ENCODE measurements at regions of chr19 and their contacts with region 1.

Region 1: GRCh38 chr19:44903602-44904425 is 1.8 kb upstream of the APOE start:
- DNase-seq: peak; percentile 71 to 89
- H3K4me3 ChIP-seq: no peak overlapping the region
- H3K4me3 Mint-ChIP-seq: no peak overlapping the region
- H3K27ac Mint-ChIP-seq: peak overlapping the region; percentile 51
- H3K4me1 ChIP-seq: peaks cover 30% of the 10 kb centered on the region
- H3K4me1 Mint-ChIP-seq: peaks cover 15% of the 10 kb centered on the region
- H3K27me3 ChIP-seq: no peaks in the 10 kb centered on the region
- H3K27me3 Mint-ChIP-seq: no peaks in the 10 kb centered on the region
- CTCF ChIP-seq: peak; percentile 99

Region 2: DNA sequence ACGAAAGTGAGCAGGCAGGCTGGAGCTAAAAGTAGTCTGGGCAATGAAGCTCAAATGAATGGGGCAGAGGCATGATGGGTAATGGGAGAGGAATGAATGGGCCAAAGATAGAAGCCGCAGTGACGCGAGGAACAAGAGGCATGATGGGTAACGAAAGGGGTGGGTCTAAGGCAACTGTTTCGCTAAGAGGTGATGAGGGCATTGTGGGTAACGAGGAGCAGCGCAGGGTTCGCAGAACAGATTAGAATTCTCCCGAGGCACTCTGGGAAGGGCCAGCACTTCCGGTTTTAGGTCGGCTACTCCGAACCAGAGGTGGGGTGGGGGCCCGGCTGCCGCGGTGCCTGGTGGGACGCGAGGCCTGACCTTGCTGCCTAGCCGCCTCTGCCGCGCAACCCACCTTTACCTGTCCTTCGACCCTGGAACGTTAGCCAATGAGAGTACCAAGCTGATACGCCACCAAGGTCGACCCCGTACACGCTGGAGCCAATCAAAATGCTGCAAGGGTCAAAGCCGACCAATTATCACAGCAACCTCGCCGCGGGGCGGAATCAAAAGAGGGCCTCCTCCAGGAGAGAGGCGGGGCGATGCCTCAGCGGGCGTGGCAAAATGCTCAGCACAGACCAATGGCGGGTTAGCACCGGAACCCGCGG is 13.3 kb before region 1 on chr19:
- CTCF ChIA-PET with region 1: interaction called, 18 read pairs
- POLR2A ChIA-PET with region 1: interaction called, 24 read pairs
- intact Hi-C with region 1: loop called (anchors 1 kb)
- DNase-seq: peak; percentile 100
- H3K4me3 ChIP-seq: peak overlapping the region; percentile 39
- H3K4me3 Mint-ChIP-seq: peak overlapping the region; percentile 79
- H3K27ac Mint-ChIP-seq: peak overlapping the region; percentile 91
- H3K4me1 ChIP-seq: peaks cover 9% of the 10 kb centered on the region
- H3K4me1 Mint-ChIP-seq: peaks cover 12% of the 10 kb centered on the region
- H3K27me3 ChIP-seq: no peaks in the 10 kb centered on the region
- H3K27me3 Mint-ChIP-seq: no peaks in the 10 kb centered on the region
- CTCF ChIP-seq: no peak

Region 3: GRCh38 chr19:44939668-44940067 is 35.9 kb after region 1 on chr19:
- CTCF ChIA-PET with region 1: interaction called, 4 read pairs
- POLR2A ChIA-PET with region 1: interaction called, 5 read pairs
- intact Hi-C with region 1: loop called (anchors 1 kb)
- DNase-seq: no peak
- H3K4me3 ChIP-seq: no peak overlapping the region
- H3K4me3 Mint-ChIP-seq: no peak overlapping the region
- H3K27ac Mint-ChIP-seq: no peak overlapping the region
- H3K4me1 ChIP-seq: peaks cover 7% of the 10 kb centered on the region; the same call in 1 of the 2 replicates
- H3K4me1 Mint-ChIP-seq: peaks cover 8% of the 10 kb centered on the region
- H3K27me3 ChIP-seq: no peaks in the 10 kb centered on the region
- H3K27me3 Mint-ChIP-seq: no peaks in the 10 kb centered on the region
- CTCF ChIP-seq: no peak

Region 4: DNA sequence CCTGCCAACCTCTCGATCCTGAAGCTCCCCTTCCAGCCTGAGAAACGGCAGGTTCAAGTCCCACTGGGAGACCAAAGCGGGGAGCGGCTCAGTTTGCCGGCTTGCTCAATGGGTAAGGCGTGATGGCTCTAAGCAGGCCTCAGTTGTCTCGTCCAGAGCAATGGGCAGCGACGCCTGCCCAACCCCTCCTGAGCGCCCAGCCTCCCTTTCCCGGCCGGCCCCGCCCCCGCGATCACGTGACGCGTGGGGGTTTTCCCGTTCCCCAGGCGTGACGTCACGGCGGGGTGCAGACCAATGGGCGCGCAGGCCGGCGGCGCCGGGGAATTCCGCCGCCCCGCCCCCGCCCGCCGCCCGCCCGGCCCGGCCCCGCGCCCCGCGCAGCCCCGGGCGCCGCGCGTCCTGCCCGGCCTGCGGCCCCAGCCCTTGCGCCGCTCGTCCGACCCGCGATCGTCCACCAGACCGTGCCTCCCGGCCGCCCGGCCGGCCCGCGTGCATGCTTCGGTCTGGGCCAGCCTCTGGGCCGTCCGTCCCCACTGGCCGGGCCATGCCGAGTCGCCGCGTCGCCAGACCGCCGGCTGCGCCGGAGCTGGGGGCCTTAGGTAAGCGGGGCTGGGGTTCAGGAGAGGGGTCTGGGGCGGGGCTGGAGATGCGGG is 97.4 kb after region 1 on chr19 and contains the start of gene RELB:
- CTCF ChIA-PET with region 1: interaction called, 3 read pairs
- POLR2A ChIA-PET with region 1: interaction called, 5 read pairs
- intact Hi-C with region 1: loop called (anchors 10 kb)
- DNase-seq: peak; percentile 94 to 99
- H3K4me3 ChIP-seq: peak within 1 kb of the TSS; percentile 91
- H3K4me3 Mint-ChIP-seq: peak within 1 kb of the TSS; percentile 94
- H3K27ac Mint-ChIP-seq: peak within 1 kb of the TSS; percentile 89
- H3K4me1 ChIP-seq: peaks cover 10% of the 10 kb centered on the region
- H3K4me1 Mint-ChIP-seq: peaks cover 8% of the 10 kb centered on the region
- H3K27me3 ChIP-seq: no peaks in the 10 kb centered on the region
- H3K27me3 Mint-ChIP-seq: no peaks in the 10 kb centered on the region
- CTCF ChIP-seq: no peak
- total RNA-seq, gene RELB: 6.3 and 10.2 TPM in 2 replicates

Region 5: GRCh38 chr19:45079063-45079910 is 175.5 kb after region 1 on chr19 and contains the start of gene GEMIN7:
- CTCF ChIA-PET with region 1: no interaction called
- POLR2A ChIA-PET with region 1: no interaction called
- intact Hi-C with region 1: loop called (anchors 10 kb)
- DNase-seq: peak; percentile 82 to 94
- H3K4me3 ChIP-seq: peak within 1 kb of the TSS; percentile 99
- H3K4me3 Mint-ChIP-seq: peak within 1 kb of the TSS; percentile 98
- H3K27ac Mint-ChIP-seq: peak within 1 kb of the TSS; percentile 94
- H3K4me1 ChIP-seq: peaks cover 24% of the 10 kb centered on the region
- H3K4me1 Mint-ChIP-seq: peaks cover 28% of the 10 kb centered on the region
- H3K27me3 ChIP-seq: no peaks in the 10 kb centered on the region
- H3K27me3 Mint-ChIP-seq: no peaks in the 10 kb centered on the region
- CTCF ChIP-seq: peak in 1 of 2 experiments; percentile 28
- total RNA-seq, gene GEMIN7: 45.8 and 49.3 TPM in 2 replicates